Activated CD4-positive, alpha-beta memory T cell treated with anti-CD3 and anti-CD28 coated beads for 36 hours (primary cell): ENCODE measurements at regions of chr7 and their contacts with region 1.

Region 1: DNA sequence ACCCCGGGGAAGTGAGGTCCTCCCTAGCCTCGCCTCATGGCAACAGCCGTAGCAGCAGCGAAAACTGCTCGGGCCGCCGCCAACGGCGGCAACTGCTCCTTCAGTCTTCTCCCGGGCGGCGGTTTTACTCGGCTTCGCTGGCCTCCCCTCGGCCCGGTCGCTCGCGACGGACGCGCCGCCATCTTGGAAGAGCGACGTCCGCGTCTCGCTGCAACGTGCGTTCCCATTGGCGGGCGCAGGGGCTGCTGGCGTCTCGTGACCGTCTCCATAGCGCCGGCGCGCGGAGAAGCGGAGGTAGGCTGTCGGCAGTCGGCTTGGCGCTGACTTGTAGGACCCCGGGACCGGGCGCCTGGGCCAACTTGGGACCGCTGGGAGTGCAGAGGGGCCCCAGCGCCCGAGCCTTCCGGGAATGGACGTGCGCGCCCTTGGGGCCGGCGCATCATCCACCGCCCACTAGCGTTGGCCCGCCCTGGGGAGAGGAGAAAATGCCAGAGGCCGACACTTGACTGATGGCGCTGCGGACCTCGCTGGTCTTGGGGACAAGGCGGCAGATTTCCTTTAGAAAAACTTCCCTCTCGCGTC is at the start of gene SNX13:
- DNase-seq: peak; percentile 92
- H3K4me3 Mint-ChIP-seq: peak within 1 kb of the TSS; percentile 98
- H3K27ac Mint-ChIP-seq: peak within 1 kb of the TSS; percentile 94
- H3K4me1 Mint-ChIP-seq: peaks cover 40% of the 10 kb centered on the region
- H3K27me3 Mint-ChIP-seq: no peaks in the 10 kb centered on the region
- total RNA-seq, gene SNX13: 18.6 to 19.8 TPM

Region 2: DNA sequence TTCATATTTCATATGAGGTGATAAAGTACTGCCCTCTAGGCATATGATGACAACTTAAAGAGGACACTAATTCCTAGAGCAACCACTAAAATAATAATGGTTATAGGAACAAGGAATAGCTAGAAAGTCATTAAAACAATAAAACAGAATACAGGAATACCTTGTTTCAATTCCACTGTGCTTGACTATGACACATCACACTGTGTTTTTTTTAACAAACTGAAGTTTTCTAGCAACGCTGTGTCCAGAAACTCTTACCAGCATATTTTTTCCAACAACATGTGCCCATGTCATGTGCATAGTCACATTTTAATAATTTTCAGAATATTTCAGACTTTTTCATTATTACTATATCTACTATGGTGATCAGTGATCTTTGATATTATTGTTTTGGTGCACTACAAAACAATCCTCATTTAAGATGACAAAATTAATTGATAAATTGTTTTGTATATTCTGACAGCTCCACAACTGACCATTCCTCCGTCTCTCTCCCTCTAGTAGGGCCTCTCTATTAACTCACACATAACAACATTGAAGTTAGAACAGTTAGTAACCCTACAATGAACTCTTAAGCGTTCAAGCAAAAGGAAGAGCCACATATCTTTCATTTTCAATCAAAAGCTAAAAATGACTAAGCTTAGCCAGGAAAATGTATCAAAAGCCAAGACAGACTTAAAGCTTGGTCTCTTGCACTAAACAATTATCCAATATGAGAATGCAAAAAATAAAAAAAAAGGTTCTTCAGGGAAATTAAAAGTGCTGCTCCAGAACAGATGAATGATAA is 85.9 kb before region 1 on chr7:
- CTCF ChIA-PET with region 1: no interaction called
- POLR2A ChIA-PET with region 1: interaction called, 4 read pairs
- intact Hi-C with region 1: loop called (anchors 2 kb)
- DNase-seq: no peak
- H3K4me3 Mint-ChIP-seq: no peak overlapping the region
- H3K27ac Mint-ChIP-seq: peak overlapping the region; percentile 20
- H3K4me1 Mint-ChIP-seq: peaks cover 25% of the 10 kb centered on the region
- H3K27me3 Mint-ChIP-seq: no peaks in the 10 kb centered on the region

Region 3: GRCh38 chr7:17921857-17922416 is 18.5 kb before region 1 on chr7:
- CTCF ChIA-PET with region 1: no interaction called
- POLR2A ChIA-PET with region 1: no interaction called
- intact Hi-C with region 1: no loop called
- DNase-seq: no peak
- H3K4me3 Mint-ChIP-seq: no peak overlapping the region
- H3K27ac Mint-ChIP-seq: no peak overlapping the region
- H3K4me1 Mint-ChIP-seq: peaks cover 42% of the 10 kb centered on the region
- H3K27me3 Mint-ChIP-seq: no peaks in the 10 kb centered on the region

Region 4: GRCh38 chr7:17952387-17952786 is 12.0 kb after region 1 on chr7:
- CTCF ChIA-PET with region 1: interaction called, 3 read pairs
- POLR2A ChIA-PET with region 1: interaction called, 6 read pairs
- intact Hi-C with region 1: loop called (anchors 1 kb)
- DNase-seq: peak; percentile 63
- H3K4me3 Mint-ChIP-seq: peak overlapping the region; percentile 28
- H3K27ac Mint-ChIP-seq: peak overlapping the region; percentile 44
- H3K4me1 Mint-ChIP-seq: peaks cover 23% of the 10 kb centered on the region
- H3K27me3 Mint-ChIP-seq: peaks cover 3% of the 10 kb centered on the region

Region 5: DNA sequence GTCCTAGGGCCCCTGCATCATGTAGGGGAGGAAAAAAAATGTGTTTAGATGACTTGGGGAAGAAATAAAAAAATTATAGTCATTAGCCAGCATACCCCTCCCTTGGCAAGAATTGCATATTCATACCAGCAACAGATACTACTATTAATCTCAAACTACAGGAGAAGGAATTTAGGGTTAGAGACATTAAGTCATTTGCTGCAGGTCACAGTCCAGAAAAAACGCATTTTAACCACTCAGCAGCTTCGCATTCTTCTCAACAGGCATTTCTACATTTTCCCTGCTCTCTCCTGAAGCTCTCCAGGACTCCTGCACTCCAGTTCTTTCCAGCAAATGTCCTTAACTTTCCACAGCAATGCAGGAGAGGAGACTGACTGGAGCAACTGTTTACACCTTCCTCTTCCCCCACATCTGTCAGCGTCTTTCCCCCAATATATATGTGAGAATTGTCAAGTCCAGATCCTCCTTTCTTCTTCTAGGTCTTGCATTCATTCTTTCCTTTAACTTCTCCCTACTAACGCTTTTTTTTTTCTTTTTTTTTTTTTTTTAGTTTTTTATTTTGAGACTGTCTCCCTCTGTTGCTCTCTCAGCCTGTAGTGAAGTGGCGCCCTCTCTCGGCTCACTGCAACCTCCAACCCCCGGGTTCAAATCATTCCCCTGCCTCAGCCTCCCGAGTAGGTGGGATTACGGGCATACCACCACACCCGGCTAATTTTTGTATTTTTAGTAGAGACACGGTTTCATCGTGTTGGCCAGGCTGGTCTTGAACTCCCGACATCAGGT is 51.7 kb after region 1 on chr7:
- CTCF ChIA-PET with region 1: no interaction called
- POLR2A ChIA-PET with region 1: no interaction called
- intact Hi-C with region 1: loop called (anchors 1 kb)
- DNase-seq: peak; percentile 47
- H3K4me3 Mint-ChIP-seq: no peak overlapping the region
- H3K27ac Mint-ChIP-seq: no peak overlapping the region
- H3K4me1 Mint-ChIP-seq: peaks cover 13% of the 10 kb centered on the region
- H3K27me3 Mint-ChIP-seq: peaks cover 10% of the 10 kb centered on the region

Region 6: GRCh38 chr7:18290223-18290622 is 349.8 kb after region 1 on chr7:
- CTCF ChIA-PET with region 1: no interaction called
- POLR2A ChIA-PET with region 1: no interaction called
- intact Hi-C with region 1: no loop called
- DNase-seq: no peak
- H3K4me3 Mint-ChIP-seq: no peak overlapping the region
- H3K27ac Mint-ChIP-seq: no peak overlapping the region
- H3K4me1 Mint-ChIP-seq: peaks cover 13% of the 10 kb centered on the region
- H3K27me3 Mint-ChIP-seq: peaks cover 7% of the 10 kb centered on the region